Tibial artery (tissue), 4 donors: ENCODE measurements at regions of chr14 and their contacts with region 1.

Region 1: DNA sequence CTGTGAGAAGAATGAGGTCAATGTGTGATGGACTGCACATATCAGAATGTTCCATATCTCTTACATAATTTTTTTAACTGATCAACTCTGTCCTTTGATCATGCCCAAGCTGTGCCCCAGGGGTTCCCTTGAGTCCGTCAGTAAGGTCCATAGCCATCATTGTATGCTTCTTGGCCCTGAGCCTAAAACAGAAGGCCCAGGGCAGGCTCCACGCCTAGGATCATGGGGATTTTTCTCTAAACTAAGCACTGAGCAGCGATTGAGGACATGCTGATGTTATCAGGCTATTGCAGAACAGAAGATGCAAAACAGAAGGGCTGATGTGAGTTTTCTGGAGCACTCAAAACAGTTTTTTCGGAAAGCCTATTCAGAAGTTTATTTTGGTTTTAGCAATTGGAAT is 20.9 kb downstream of the RNASE9 start:
- DNase-seq: no peak
- H3K4me3 ChIP-seq: no peak overlapping the region
- H3K27ac ChIP-seq: no peak overlapping the region
- H3K4me1 ChIP-seq: no peaks in the 10 kb centered on the region
- H3K27me3 ChIP-seq: no peaks in the 10 kb centered on the region
- CTCF ChIP-seq: no peak

Region 2: GRCh38 chr14:20413045-20413799 is 126.7 kb before region 1 on chr14 and contains the start of gene TEP1:
- intact Hi-C with region 1: no loop called
- DNase-seq: peak; percentile 92 to 94
- H3K4me3 ChIP-seq: peak within 1 kb of the TSS; percentile 75 to 91
- H3K27ac ChIP-seq: peak within 1 kb of the TSS; percentile 94
- H3K4me1 ChIP-seq: peaks cover 0 to 19% (median 12%) of the 10 kb centered on the region in 4 donors
- H3K27me3 ChIP-seq: no peaks in the 10 kb centered on the region
- CTCF ChIP-seq: peak in 1 of 2 experiments; percentile 8

Region 3: GRCh38 chr14:20603813-20604690 is 64.1 kb after region 1 on chr14:
- intact Hi-C with region 1: loop called (anchors 5 kb)
- DNase-seq: no peak
- H3K4me3 ChIP-seq: no peak overlapping the region
- H3K27ac ChIP-seq: no peak overlapping the region
- H3K4me1 ChIP-seq: peaks cover 0 to 2% (median 0%) of the 10 kb centered on the region in 4 donors
- H3K27me3 ChIP-seq: no peaks in the 10 kb centered on the region
- CTCF ChIP-seq: no peak